Heart left ventricle (tissue), 16 donors: ENCODE measurements at regions of chr18 and their contacts with region 1.

Region 1: DNA sequence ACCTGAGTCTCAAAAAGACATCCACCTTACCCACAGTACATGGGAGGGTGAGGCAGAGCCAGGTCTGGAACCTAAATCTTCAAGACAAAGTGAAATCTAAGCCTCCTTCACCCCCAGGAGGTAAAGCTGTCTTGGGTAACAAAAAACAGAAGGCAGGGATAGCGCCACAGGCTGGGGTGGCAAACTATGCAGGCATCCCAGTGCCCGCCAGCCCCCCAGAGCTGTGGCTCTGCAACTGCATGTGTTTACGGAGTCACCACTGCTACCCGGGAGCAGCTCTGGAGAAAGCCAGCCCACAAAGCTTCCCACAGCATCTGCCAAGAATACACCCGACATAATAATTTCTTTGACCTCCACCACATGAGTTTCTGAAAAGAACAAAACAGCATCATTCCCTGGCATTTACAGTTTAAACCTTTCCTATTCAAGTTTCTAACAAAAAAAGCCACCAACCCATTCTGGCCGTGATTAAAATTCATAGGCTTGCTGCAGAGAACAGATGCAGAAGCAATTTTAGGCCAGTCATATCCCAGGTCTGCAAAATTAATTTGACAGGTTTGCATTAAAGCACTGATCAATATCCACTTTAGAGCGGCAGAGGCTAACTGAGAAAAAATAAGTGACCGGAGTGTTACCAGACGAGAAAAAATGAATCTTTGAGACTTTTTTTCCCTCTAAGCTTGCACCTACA is 309.4 kb upstream of the SKOR2 start:
- DNase-seq: no peak
- ATAC-seq: no peak
- H3K4me3 ChIP-seq: no peak overlapping the region
- H3K27ac ChIP-seq: no peak overlapping the region
- H3K4me1 ChIP-seq: no peaks in the 10 kb centered on the region
- H3K27me3 ChIP-seq: peaks cover 0 to 61% (median 26%) of the 10 kb centered on the region in 9 donors
- CTCF ChIP-seq: no peak
- POLR2A ChIP-seq: no peak

Region 2: GRCh38 chr18:47075098-47075883 is 485.6 kb before region 1 on chr18:
- intact Hi-C with region 1: loop called in 1 of 10 experiments (anchors 10 kb)
- DNase-seq: no peak
- ATAC-seq: no peak
- H3K4me3 ChIP-seq: no peak overlapping the region
- H3K27ac ChIP-seq: no peak overlapping the region
- H3K4me1 ChIP-seq: peaks cover 0 to 5% (median 0%) of the 10 kb centered on the region in 12 donors
- H3K27me3 ChIP-seq: no peaks in the 10 kb centered on the region
- CTCF ChIP-seq: no peak
- POLR2A ChIP-seq: no peak

Region 3: GRCh38 chr18:47748847-47749599 is 188.2 kb after region 1 on chr18:
- intact Hi-C with region 1: no loop called
- DNase-seq: peak; percentile 71 to 92 (median 80)
- ATAC-seq: peak; percentile 85 to 96 (median 90)
- H3K4me3 ChIP-seq: peak overlapping the region in 9 of 12 donors; percentile 34 to 54 (median 45)
- H3K27ac ChIP-seq: no peak overlapping the region
- H3K4me1 ChIP-seq: peaks cover 0 to 6% (median 0%) of the 10 kb centered on the region in 12 donors
- H3K27me3 ChIP-seq: peaks cover 0 to 17% (median 3%) of the 10 kb centered on the region in 9 donors
- CTCF ChIP-seq: peak; percentile 93 to 100 (median 100)
- POLR2A ChIP-seq: no peak